ENCODE measurements at regions of chr6 and their contacts with region 1.

Region 1: GRCh38 chr6:31541658-31542521 is at the start of gene DDX39B:
- DNase-seq: peak; percentile 96 to 98
- H3K4me3 ChIP-seq: peak within 1 kb of the TSS; percentile 69 to 71
- H3K27ac ChIP-seq: peak within 1 kb of the TSS; percentile 91 to 94
- H3K4me1 ChIP-seq: peaks cover 0 to 43% (median 34%) of the 10 kb centered on the region in 4 donors
- H3K27me3 ChIP-seq: no peaks in the 10 kb centered on the region
- CTCF ChIP-seq: peak in 1 of 2 experiments; percentile 10

Region 2: DNA sequence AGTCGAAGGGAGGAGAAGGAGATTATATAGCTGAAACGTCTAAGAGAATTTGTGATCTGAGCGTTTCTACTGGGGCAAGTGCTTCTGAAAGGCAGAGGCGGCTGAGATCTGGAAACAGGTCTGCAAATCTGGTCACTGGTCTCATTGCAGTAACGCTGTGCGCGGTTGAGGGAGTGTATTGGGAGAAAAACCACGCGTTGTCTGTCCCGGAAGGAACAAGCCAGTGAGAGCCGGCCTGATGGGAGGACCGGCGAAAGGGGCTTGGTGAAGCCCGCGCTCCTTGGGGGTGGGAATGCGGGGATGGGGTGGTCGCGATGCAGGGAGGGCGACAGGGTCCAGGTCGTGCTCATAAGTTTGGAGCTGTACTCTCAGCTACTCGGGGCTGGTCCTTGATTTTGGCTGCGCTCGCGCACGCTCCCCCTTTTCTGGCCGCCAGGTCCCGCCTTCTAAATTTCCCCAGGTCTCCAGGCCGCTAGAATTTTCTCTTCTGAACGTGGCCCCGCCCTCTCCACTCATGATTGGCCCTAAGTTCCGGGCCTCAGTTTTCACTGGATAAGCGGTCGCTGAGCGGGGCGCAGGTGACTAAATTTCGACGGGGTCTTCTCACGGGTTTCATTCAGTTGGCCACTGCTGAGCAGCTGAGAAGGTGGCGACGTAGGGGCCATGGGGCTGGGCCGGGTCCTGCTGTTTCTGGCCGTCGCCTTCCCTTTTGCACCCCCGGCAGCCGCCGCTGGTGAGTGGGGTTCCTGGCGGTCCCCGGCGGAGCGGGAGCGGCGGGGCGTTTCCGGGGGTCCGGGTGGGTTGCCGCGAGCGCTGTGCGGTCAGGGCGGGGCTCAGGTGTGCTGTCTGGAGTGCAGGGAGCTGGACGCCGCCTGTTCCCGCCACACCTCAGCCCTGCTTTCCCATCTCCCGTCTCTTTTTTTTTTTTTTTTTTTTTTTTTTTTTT is 44.1 kb before region 1 on chr6 and contains the start of gene MICB:
- intact Hi-C with region 1: loop called (anchors 2 kb)
- DNase-seq: peak; percentile 88
- H3K4me3 ChIP-seq: peak within 1 kb of the TSS; percentile 55 to 80
- H3K27ac ChIP-seq: peak within 1 kb of the TSS; percentile 49 to 76
- H3K4me1 ChIP-seq: peaks cover 0 to 61% (median 19%) of the 10 kb centered on the region in 4 donors
- H3K27me3 ChIP-seq: no peaks in the 10 kb centered on the region
- CTCF ChIP-seq: peak in 1 of 2 experiments; percentile 6

Region 3: DNA sequence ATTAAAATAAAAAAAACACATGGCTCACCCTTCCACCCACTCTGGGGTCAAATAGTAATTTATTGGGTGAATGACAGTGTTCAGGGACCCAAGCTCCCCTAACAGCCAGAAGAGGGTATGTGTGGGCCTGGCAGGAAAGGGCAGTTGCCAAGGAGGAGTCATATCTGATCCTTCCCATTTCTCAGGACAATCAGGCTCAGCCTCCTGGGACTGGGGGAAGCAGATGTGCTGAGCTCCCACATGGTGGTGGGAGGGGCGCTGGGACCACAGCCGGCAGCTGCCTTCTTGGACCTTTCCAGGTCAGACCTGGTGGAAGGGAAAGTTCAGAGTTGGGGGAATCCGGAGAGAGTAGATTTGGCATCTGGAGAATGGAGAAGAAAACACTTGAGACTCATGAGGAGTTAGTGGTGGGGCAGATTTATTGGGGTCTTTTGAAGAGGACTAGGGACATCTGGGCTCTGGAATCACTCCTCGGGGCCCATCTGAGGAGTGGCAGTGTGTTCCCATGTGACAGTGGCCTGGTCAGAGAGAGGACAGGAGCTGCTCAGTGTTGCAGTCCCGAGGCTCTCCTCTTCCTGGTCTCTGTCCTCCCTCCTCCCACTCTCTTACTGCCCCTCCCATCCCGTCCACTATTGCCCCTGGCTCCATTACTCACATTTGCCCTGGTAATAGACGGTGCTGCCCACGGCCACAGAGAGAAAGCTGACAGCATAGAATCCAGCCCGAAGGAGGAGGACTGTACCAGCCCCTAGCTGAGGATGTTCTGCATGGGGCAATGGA is 47.2 kb after region 1 on chr6:
- intact Hi-C with region 1: no loop called
- DNase-seq: no peak
- H3K4me3 ChIP-seq: no peak overlapping the region
- H3K27ac ChIP-seq: no peak overlapping the region
- H3K4me1 ChIP-seq: no peaks in the 10 kb centered on the region
- H3K27me3 ChIP-seq: peaks cover 0 to 23% of the 10 kb centered on the region in 2 donors
- CTCF ChIP-seq: no peak